ENCODE measurements at regions of chr11 and their contacts with region 1.

Region 1: DNA sequence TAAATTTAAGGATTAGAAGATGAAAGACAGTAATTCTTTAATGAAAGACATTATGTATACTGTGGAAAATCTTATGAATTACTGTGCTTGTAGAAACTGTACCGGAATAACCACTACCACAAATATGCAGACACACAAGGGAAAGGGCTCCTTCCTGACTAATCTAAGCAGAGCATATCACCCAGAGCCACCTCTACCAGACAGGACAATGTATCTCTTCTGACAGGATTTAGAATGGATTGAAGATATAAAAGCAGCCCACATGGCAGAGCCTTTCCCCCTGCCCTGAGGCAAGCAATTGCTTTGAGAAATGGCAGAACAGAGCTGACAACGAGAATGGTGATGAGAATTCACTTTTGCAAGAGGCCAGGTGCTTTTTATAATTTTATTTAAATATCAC is 144.1 kb downstream of the NOX4 start:
- DNase-seq: no peak
- H3K4me3 ChIP-seq: no peak overlapping the region
- H3K27ac ChIP-seq: no peak overlapping the region
- H3K4me1 ChIP-seq: peaks cover 0 to 18% of the 10 kb centered on the region in 2 donors
- H3K27me3 ChIP-seq: no peaks in the 10 kb centered on the region
- CTCF ChIP-seq: no peak

Region 2: GRCh38 chr11:89361734-89362133 is 14.7 kb after region 1 on chr11:
- intact Hi-C with region 1: no loop called
- DNase-seq: no peak
- H3K4me3 ChIP-seq: no peak overlapping the region
- H3K27ac ChIP-seq: no peak overlapping the region
- H3K4me1 ChIP-seq: peaks cover 0 to 19% of the 10 kb centered on the region in 2 donors
- H3K27me3 ChIP-seq: no peaks in the 10 kb centered on the region
- CTCF ChIP-seq: no peak

Region 3: GRCh38 chr11:89381094-89381493 is 34.0 kb after region 1 on chr11:
- intact Hi-C with region 1: loop called (anchors 5 kb)
- DNase-seq: peak; percentile 14 to 83
- H3K4me3 ChIP-seq: no peak overlapping the region
- H3K27ac ChIP-seq: peak overlapping the region; percentile 86 to 89
- H3K4me1 ChIP-seq: peaks cover 5 to 27% of the 10 kb centered on the region in 2 donors
- H3K27me3 ChIP-seq: no peaks in the 10 kb centered on the region
- CTCF ChIP-seq: no peak

Region 4: DNA sequence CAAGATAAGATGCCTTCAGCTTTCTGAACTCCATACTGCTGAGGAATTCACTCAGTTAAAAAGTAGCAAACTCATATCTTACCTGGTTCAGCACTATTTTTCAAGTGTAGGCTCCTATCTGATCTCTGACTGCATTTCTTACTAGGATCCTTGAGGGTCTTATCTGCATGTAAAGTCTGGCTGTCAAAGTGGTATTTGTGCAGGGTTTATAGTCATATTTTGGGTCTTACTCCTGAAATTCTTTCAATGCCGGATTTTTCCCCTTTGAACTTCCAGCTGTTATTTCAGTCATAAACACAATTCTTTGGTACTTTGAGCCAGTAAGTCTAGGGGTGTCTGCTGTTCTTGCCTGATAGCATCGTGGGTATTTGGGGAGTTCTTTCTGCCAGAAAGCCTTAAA is 169.4 kb after region 1 on chr11:
- intact Hi-C with region 1: no loop called
- DNase-seq: no peak
- H3K4me3 ChIP-seq: no peak overlapping the region
- H3K27ac ChIP-seq: no peak overlapping the region
- H3K4me1 ChIP-seq: peaks cover 0 to 10% of the 10 kb centered on the region in 2 donors
- H3K27me3 ChIP-seq: no peaks in the 10 kb centered on the region
- CTCF ChIP-seq: no peak